Caco-2 (cell line): ENCODE measurements at regions of chr2 and their contacts with region 1.

Region 1: GRCh38 chr2:38619458-38620164 is 16.9 kb upstream of the HNRNPLL start:
- DNase-seq: no peak
- H3K4me3 ChIP-seq: no peak overlapping the region
- H3K4me3 Mint-ChIP-seq: no peak overlapping the region
- H3K27ac Mint-ChIP-seq: no peak overlapping the region
- H3K4me1 ChIP-seq: no peaks in the 10 kb centered on the region
- H3K4me1 Mint-ChIP-seq: peaks cover 8% of the 10 kb centered on the region
- H3K27me3 ChIP-seq: no peaks in the 10 kb centered on the region
- H3K27me3 Mint-ChIP-seq: no peaks in the 10 kb centered on the region
- CTCF ChIP-seq: no peak

Region 2: DNA sequence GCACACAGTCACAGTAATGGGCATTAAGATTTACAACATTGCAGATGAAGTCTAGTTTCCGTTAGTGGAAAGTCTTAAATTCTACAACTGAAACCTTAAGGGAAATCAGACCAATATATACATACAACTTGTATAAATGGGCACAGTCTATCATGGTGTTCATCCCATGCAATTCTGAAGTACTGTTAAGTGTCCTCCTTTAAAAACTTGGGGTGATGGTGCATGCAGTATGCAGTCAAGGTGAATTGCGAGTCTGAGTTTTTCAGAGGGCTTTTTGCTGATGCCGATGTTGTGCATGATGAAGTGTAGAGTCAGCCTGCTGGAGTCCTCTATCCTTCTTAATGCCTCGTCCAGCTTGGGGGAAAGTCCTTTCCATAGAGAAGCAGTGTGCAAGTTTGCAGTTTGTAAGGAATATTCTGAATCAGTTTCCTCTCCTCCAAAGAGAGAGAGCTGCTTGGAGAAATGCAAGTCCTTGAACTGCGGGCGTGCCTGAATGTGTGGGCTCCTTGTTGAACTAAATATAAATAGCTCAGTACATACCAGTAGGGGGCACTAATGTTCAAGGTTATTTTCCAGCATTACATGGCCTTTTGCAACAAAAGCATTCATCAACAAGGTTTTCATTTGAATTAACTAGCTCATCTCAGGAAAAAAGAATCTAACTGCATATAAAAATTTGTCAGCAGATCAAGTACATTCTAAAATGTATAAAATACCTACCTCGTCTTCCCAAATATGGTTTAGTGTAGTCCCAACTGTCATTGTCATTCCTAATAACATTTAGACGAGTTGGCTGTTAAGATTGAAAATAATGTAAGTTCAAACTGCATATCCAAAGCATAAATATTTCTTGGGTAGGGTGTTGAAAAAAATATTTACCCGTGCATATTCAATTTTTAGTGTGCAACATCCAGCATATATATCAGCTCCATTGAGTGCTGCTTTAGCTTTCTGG is 38.1 kb before region 1 on chr2:
- CTCF ChIA-PET with region 1: interaction called, 3 read pairs
- POLR2A ChIA-PET with region 1: no interaction called
- intact Hi-C with region 1: loop called (anchors 2 kb)
- DNase-seq: peak in 1 of 2 experiments; percentile 69
- H3K4me3 ChIP-seq: no peak overlapping the region
- H3K4me3 Mint-ChIP-seq: no peak overlapping the region
- H3K27ac Mint-ChIP-seq: no peak overlapping the region
- H3K4me1 ChIP-seq: peaks cover 4% of the 10 kb centered on the region; the same call in 1 of the 2 replicates
- H3K4me1 Mint-ChIP-seq: peaks cover 9% of the 10 kb centered on the region
- H3K27me3 ChIP-seq: no peaks in the 10 kb centered on the region
- H3K27me3 Mint-ChIP-seq: no peaks in the 10 kb centered on the region
- CTCF ChIP-seq: peak; percentile 50 to 82